ENCODE measurements at regions of chr21 and their contacts with region 1.

Region 1: DNA sequence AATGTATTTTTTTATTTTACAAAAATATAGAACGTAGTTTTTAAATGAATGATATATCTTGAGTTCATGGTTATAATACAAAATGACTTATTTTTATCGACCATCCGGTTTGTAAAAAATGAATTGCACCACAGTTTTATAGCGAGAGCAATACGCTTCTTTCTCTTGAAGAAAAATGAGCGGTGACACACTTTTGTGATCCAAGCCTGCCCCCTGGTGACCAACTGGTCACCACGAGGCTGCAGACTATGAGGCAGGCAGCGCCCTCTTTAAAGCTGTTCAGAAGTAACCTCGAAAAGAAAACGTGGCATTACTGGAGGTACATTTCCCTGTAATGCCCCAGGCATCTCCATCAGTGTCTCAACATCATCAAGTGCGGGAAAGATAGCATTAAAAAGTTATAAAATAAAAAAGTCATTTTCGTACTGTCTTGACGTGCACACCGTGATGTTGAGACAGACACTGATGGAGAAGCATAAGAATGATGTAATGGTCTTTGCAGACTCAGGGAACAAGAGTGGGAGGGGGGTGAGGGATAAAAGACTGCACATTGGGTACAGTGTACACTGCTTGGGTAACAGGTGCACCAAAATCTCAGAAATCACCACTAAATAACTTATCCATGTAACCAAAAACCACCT is 734.2 kb upstream of the ADAMTS5 start:
- DNase-seq: peak; percentile 25
- H3K4me3 Mint-ChIP-seq: no peak overlapping the region
- H3K27ac Mint-ChIP-seq: no peak overlapping the region
- H3K4me1 Mint-ChIP-seq: no peaks in the 10 kb centered on the region
- H3K27me3 Mint-ChIP-seq: peaks cover 3% of the 10 kb centered on the region

Region 2: GRCh38 chr21:26715878-26716506 is 985.1 kb before region 1 on chr21:
- intact Hi-C with region 1: loop called (anchors 5 kb)
- DNase-seq: no peak
- H3K4me3 Mint-ChIP-seq: no peak overlapping the region
- H3K27ac Mint-ChIP-seq: no peak overlapping the region
- H3K4me1 Mint-ChIP-seq: no peaks in the 10 kb centered on the region
- H3K27me3 Mint-ChIP-seq: no peaks in the 10 kb centered on the region

Region 3: GRCh38 chr21:26732432-26733221 is 968.5 kb before region 1 on chr21:
- intact Hi-C with region 1: loop called (anchors 5 kb)
- DNase-seq: no peak
- H3K4me3 Mint-ChIP-seq: no peak overlapping the region
- H3K27ac Mint-ChIP-seq: no peak overlapping the region
- H3K4me1 Mint-ChIP-seq: no peaks in the 10 kb centered on the region
- H3K27me3 Mint-ChIP-seq: no peaks in the 10 kb centered on the region

Region 4: GRCh38 chr21:26769613-26770188 is 931.4 kb before region 1 on chr21:
- intact Hi-C with region 1: loop called (anchors 1 kb)
- DNase-seq: no peak
- H3K4me3 Mint-ChIP-seq: no peak overlapping the region
- H3K27ac Mint-ChIP-seq: no peak overlapping the region
- H3K4me1 Mint-ChIP-seq: no peaks in the 10 kb centered on the region
- H3K27me3 Mint-ChIP-seq: peaks cover 11% of the 10 kb centered on the region

Region 5: GRCh38 chr21:26850108-26850643 is 850.9 kb before region 1 on chr21:
- intact Hi-C with region 1: loop called (anchors 1 kb)
- DNase-seq: no peak
- H3K4me3 Mint-ChIP-seq: no peak overlapping the region
- H3K27ac Mint-ChIP-seq: no peak overlapping the region
- H3K4me1 Mint-ChIP-seq: peaks cover 20% of the 10 kb centered on the region
- H3K27me3 Mint-ChIP-seq: peaks cover 38% of the 10 kb centered on the region

Region 6: GRCh38 chr21:27674041-27674615 is 27.0 kb before region 1 on chr21:
- intact Hi-C with region 1: no loop called
- DNase-seq: no peak
- H3K4me3 Mint-ChIP-seq: no peak overlapping the region
- H3K27ac Mint-ChIP-seq: no peak overlapping the region
- H3K4me1 Mint-ChIP-seq: no peaks in the 10 kb centered on the region
- H3K27me3 Mint-ChIP-seq: no peaks in the 10 kb centered on the region

Region 7: DNA sequence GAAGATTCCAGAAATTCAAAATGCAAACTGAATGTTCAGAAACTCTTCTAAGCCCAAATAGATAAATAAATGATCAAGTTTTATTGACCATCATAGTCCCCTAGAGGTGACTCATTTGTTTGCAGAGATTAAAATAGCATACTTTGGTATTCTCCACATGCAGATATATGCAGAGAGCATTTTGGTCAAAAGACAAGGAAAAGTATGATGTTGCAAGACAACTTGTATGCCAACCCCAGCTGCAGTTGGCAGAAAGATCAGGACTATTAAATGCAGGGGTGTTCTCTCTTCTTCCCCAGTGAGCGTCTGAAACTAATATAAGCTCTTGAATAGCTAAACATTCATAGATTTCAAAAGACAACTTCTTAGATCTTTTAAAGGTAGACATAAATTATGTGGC is 886.7 kb after region 1 on chr21:
- intact Hi-C with region 1: no loop called
- DNase-seq: no peak
- H3K4me3 Mint-ChIP-seq: no peak overlapping the region
- H3K27ac Mint-ChIP-seq: no peak overlapping the region
- H3K4me1 Mint-ChIP-seq: no peaks in the 10 kb centered on the region
- H3K27me3 Mint-ChIP-seq: no peaks in the 10 kb centered on the region

Measured in activated T-helper 1 cell treated with anti-CD3 and anti-CD28 coated beads, Interleukin-12 subunit alpha, Interleukin-12 subunit beta, Interleukin-2, Interleukin-4 antibody, amounts not matched to agents 30 ng/mL and 10 ng/mL and 1 ng/mL, durations not matched to agents 14 hours and 24 hours and 36 hours (primary cell).